ENCODE measurements at regions of chrX and their contacts with region 1.

Region 1: DNA sequence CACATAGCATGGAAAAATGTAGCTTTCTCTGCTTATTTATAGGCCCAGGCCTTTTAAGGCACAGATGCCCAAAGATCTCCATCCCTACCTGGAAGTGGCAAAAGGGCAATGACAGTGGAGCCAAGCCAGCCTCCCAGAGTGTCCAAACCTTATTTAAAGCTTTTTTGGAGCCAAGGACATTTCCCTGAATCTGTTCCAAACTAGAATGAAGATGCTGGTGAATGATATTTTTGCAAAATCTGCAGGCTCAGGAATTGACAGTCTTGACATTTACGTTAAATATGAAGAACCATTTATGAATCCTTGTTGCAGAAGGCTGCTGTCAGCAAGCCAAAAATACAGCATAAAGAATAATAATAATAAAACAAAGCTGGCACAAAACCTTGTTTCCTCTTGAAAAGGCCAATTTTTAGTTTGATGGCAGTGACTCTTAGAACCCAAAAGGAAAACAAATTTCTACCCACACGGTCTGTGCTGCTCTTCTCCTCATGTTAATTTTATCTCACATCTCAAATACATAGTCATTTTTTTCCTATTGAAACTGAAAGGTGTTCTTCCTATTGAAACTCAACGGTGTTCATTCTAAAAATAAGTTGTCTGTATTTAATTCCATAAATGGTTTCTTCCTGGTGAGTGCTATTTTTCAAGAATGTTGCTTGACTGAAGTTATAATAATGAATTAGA is 206.3 kb upstream of the TBL1X start:
- DNase-seq: no peak
- H3K4me3 Mint-ChIP-seq: no peak overlapping the region
- H3K27ac Mint-ChIP-seq: peak overlapping the region; percentile 84
- H3K4me1 Mint-ChIP-seq: peaks cover 37% of the 10 kb centered on the region
- H3K27me3 Mint-ChIP-seq: no peaks in the 10 kb centered on the region

Region 2: GRCh38 chrX:9279234-9279544 is 20.6 kb after region 1 on chrX:
- intact Hi-C with region 1: loop called (anchors 1 kb)
- DNase-seq: no peak
- H3K4me3 Mint-ChIP-seq: peak overlapping the region; percentile 51
- H3K27ac Mint-ChIP-seq: peak overlapping the region; percentile 88
- H3K4me1 Mint-ChIP-seq: peaks cover 31% of the 10 kb centered on the region
- H3K27me3 Mint-ChIP-seq: no peaks in the 10 kb centered on the region

Region 3: DNA sequence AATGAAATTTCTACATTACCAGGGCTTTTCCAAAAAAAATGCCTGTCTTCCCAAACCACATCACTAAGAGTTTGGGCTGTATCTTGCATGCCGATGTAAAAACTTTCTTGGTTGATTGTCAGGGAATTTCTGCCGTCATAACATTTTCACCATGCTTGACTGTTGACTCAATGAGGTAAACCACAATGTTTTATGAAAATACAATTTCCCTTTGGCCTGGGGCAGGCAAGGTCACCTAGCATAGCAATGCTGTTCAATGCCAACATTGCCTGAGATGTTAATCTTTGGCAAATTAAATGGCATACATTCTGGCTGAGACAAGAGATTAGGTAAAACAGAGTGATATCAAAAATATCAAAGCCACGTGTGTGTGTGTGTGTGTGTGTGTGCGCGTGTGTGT is 69.2 kb after region 1 on chrX:
- intact Hi-C with region 1: no loop called
- DNase-seq: no peak
- H3K4me3 Mint-ChIP-seq: no peak overlapping the region
- H3K27ac Mint-ChIP-seq: no peak overlapping the region
- H3K4me1 Mint-ChIP-seq: peaks cover 14% of the 10 kb centered on the region
- H3K27me3 Mint-ChIP-seq: peaks cover 3% of the 10 kb centered on the region